Panc1 (cell line): ENCODE measurements at regions of chr3 and their contacts with region 1.

Region 1: GRCh38 chr3:62405135-62405534 is 31.8 kb upstream of the FEZF2 start:
- DNase-seq: no peak
- ATAC-seq: no peak
- H3K4me3 ChIP-seq: no peak overlapping the region
- H3K27ac ChIP-seq: no peak overlapping the region
- H3K4me1 ChIP-seq: no peaks in the 10 kb centered on the region
- H3K27me3 ChIP-seq: no peaks in the 10 kb centered on the region; the same call in none of the 2 replicates
- CTCF ChIP-seq: no peak

Region 2: GRCh38 chr3:62252438-62253157 is 152.5 kb before region 1 on chr3:
- CTCF ChIA-PET with region 1: no interaction called
- POLR2A ChIA-PET with region 1: no interaction called
- in situ Hi-C with region 1: no loop called
- intact Hi-C with region 1: no loop called
- DNase-seq: no peak
- ATAC-seq: no peak
- H3K4me3 ChIP-seq: no peak overlapping the region
- H3K27ac ChIP-seq: no peak overlapping the region
- H3K4me1 ChIP-seq: no peaks in the 10 kb centered on the region
- H3K27me3 ChIP-seq: no peaks in the 10 kb centered on the region
- CTCF ChIP-seq: no peak

Region 3: GRCh38 chr3:62445267-62445666 is 40.1 kb after region 1 on chr3:
- CTCF ChIA-PET with region 1: no interaction called
- POLR2A ChIA-PET with region 1: no interaction called
- in situ Hi-C with region 1: no loop called
- intact Hi-C with region 1: no loop called
- DNase-seq: no peak
- ATAC-seq: no peak
- H3K4me3 ChIP-seq: peak overlapping the region; percentile 2 to 36; a peak in 3 of 4 replicates
- H3K27ac ChIP-seq: no peak overlapping the region
- H3K4me1 ChIP-seq: no peaks in the 10 kb centered on the region
- H3K27me3 ChIP-seq: no peaks in the 10 kb centered on the region
- CTCF ChIP-seq: no peak

Region 4: DNA sequence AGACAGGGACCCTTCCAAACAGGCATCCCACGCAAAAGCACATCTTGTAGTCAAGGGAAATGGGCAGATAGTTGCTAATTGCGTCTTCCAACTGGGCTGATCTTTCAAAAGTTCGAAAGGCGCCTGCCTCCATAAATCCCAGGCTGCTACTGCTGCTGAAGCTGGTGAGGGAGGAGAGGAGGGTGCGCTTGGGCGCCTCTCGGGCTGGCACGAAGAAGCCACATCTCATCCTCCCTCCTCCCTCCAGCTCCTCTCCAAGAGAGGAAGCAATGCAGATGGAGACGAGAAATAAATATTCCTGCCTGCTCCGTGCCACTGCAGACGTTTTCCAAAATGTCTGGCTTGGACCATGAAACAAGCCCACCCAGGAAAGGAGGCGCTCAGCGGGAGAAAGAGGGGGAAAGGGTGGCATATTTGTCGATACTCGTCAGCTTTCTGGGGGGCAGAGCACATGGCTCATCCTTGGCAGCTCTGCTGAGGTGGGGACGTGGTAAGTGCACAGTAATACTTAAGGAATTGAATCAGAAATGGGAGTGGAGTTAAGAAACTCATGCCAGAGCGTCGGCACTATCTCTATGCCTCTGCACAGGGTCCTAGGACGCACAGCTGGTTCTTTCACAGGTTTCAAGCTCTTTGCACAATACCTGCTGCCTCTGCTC is 57.1 kb after region 1 on chr3:
- CTCF ChIA-PET with region 1: interaction called, 12 read pairs
- POLR2A ChIA-PET with region 1: no interaction called
- in situ Hi-C with region 1: no loop called
- intact Hi-C with region 1: no loop called
- DNase-seq: no peak
- ATAC-seq: no peak
- H3K4me3 ChIP-seq: no peak overlapping the region
- H3K27ac ChIP-seq: no peak overlapping the region
- H3K4me1 ChIP-seq: no peaks in the 10 kb centered on the region
- H3K27me3 ChIP-seq: 0 out of 2 replicates have a peak, but pooled peaks cover 2% of the 10 kb centered on the region
- CTCF ChIP-seq: no peak